PC-9 (cell line): ENCODE measurements at regions of chr11 and their contacts with region 1.

Region 1: DNA sequence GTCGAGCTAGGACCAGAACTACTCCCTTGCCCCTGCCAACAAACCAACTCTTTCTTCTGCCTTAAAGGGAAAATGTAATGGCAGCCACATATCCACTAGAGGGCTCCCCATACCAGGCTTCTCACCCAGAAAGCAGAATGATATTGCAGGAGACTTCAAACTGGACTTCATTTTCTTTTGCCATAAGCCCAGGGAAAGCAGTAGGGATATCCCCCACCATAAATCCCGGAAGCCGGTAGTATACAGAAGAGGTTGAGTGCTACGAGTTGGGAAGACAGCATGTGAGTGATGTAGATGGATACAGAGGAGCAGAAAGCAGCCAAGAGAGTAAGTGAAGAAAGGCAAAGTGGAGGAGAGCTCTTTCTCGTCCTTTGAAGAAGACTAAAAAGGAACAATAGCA is 12.1 kb downstream of the PLAAT5 start:
- DNase-seq: peak; percentile 62 to 63
- H3K4me3 ChIP-seq: no peak overlapping the region
- H3K27ac ChIP-seq: no peak overlapping the region
- H3K4me1 ChIP-seq: no peaks in the 10 kb centered on the region
- H3K27me3 ChIP-seq: no peaks in the 10 kb centered on the region
- CTCF ChIP-seq: peak; percentile 99

Region 2: DNA sequence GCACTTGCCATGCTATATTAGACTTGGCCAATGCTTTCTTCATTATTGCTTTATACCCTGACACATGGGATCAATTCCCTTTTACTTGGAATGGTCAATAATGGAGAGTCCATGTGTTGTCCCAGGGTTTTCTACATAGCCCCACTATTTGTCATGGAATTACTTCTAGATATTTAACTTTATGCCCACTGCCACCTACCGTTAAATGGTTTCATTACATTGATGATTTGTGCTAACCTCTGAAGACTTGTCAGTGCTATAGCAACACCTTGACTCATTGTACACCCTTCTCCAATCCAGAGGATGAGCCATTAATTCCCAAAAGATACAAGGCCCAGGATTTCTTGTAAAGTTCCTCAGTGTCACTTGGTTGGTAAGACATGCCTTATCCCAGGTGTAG is 204.1 kb before region 1 on chr11:
- CTCF ChIA-PET with region 1: no interaction called
- POLR2A ChIA-PET with region 1: no interaction called
- intact Hi-C with region 1: no loop called
- DNase-seq: no peak
- H3K4me3 ChIP-seq: no peak overlapping the region
- H3K27ac ChIP-seq: no peak overlapping the region
- H3K4me1 ChIP-seq: no peaks in the 10 kb centered on the region
- H3K27me3 ChIP-seq: peaks cover 12% of the 10 kb centered on the region; the same call in 1 of the 2 replicates
- CTCF ChIP-seq: peak; percentile 46

Region 3: DNA sequence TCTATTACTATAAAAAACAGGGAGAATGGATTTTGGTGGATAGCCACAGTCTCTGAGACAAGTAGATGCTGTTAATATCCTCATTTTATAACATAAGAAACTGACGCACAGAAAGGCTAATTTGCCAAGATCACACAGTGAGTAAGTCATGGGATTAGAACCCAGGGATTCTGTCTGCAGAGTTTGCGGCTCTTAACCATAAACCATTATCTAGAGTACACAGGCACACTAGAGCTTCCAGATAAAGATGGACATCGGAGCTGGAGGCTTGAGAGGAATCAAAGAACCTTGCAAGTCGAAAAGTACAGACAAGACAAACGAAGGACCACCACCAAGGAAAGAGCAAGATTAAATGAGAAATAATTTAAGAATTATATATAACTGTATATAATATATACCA is 38.3 kb after region 1 on chr11:
- CTCF ChIA-PET with region 1: no interaction called
- POLR2A ChIA-PET with region 1: no interaction called
- intact Hi-C with region 1: no loop called
- DNase-seq: no peak
- H3K4me3 ChIP-seq: no peak overlapping the region
- H3K27ac ChIP-seq: no peak overlapping the region
- H3K4me1 ChIP-seq: no peaks in the 10 kb centered on the region
- H3K27me3 ChIP-seq: no peaks in the 10 kb centered on the region
- CTCF ChIP-seq: no peak

Region 4: DNA sequence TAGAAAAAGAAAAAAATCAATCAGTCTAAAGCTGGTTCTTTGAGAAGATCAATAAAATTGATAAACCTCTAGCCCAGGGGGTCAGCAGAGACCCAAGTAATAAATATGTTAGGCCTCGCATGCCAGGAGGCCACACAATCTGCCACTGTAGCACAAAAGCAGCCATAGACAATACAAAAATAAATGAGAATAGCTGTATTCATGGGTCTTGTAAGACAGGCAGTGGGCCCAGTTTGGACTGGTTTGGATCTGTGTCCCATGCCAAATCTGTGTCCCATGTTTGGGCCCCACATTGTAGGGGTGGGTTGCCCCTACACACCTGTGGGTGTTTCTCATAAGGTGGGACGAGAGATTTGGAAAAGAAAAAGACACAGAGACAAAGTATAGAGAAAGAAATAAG is 51.1 kb after region 1 on chr11:
- CTCF ChIA-PET with region 1: interaction called, 5 read pairs
- POLR2A ChIA-PET with region 1: no interaction called
- intact Hi-C with region 1: loop called (anchors 2 kb)
- DNase-seq: no peak
- H3K4me3 ChIP-seq: no peak overlapping the region
- H3K27ac ChIP-seq: no peak overlapping the region
- H3K4me1 ChIP-seq: peaks cover 36% of the 10 kb centered on the region
- H3K27me3 ChIP-seq: no peaks in the 10 kb centered on the region
- CTCF ChIP-seq: no peak

Region 5: DNA sequence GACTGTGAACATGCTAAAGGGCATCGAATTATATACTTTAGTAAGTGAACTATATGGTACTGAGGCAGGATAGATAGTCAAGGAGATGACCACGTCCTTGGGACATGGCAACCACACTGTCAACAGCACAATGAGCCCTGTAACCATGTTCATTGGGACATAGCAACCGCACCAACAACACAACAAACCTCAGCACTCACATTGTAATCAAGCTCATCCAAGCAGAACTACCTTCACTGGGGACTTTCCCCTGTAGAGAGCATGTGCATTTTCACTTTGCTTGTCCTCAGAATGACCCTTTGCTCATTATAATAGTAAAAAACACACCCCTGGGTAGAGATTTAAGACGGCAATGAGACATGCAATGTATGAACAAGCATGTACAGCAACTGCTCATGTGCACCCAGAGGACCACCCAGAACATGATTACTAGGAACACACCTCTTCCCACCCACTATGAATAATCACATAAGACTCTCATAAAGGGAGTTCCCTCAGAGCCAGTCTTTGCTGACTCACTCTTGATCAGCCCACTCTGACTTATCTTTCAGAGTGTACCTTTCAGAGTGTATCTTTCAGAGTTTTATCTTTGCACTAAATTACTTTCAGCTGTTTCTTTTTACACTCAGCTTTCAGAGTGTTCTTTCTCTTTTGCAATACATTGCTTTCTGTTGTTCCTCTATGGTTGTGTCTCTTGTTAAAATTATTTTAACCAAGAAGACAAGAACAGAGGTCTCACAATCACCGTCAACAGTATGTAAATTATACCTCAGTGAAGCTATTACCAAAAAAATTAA is 88.3 kb after region 1 on chr11:
- CTCF ChIA-PET with region 1: no interaction called
- POLR2A ChIA-PET with region 1: no interaction called
- intact Hi-C with region 1: loop called (anchors 10 kb)
- DNase-seq: peak; percentile 72 to 96
- H3K4me3 ChIP-seq: peak overlapping the region; percentile 35; the same call in 1 of the 2 replicates
- H3K27ac ChIP-seq: peak overlapping the region; percentile 91
- H3K4me1 ChIP-seq: peaks cover 56% of the 10 kb centered on the region
- H3K27me3 ChIP-seq: no peaks in the 10 kb centered on the region
- CTCF ChIP-seq: no peak

Region 6: DNA sequence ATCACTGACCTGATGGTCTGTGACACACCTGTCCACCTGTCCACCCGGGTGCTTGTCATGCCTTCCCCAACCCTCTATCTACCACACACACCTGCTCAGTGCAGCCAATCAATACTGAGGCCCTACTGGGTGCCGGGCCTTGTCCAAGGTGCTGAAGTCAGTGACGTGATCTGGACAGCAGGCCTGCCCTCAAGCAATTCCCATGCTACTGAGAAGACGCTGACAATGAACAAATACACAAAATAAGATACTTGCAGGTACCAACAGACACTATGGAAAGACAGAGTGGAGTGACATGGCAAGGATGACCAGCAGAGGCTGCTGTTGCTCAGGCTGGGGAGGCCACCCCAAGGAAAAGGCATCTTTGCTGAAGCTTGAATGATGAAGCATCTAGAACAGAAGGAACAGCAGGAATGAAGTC is 114.1 kb after region 1 on chr11:
- CTCF ChIA-PET with region 1: no interaction called
- POLR2A ChIA-PET with region 1: interaction called, 4 read pairs
- intact Hi-C with region 1: loop called (anchors 2 kb)
- DNase-seq: peak in 1 of 2 experiments; percentile 44
- H3K4me3 ChIP-seq: no peak overlapping the region
- H3K27ac ChIP-seq: no peak overlapping the region
- H3K4me1 ChIP-seq: no peaks in the 10 kb centered on the region
- H3K27me3 ChIP-seq: no peaks in the 10 kb centered on the region
- CTCF ChIP-seq: peak; percentile 84

Region 7: DNA sequence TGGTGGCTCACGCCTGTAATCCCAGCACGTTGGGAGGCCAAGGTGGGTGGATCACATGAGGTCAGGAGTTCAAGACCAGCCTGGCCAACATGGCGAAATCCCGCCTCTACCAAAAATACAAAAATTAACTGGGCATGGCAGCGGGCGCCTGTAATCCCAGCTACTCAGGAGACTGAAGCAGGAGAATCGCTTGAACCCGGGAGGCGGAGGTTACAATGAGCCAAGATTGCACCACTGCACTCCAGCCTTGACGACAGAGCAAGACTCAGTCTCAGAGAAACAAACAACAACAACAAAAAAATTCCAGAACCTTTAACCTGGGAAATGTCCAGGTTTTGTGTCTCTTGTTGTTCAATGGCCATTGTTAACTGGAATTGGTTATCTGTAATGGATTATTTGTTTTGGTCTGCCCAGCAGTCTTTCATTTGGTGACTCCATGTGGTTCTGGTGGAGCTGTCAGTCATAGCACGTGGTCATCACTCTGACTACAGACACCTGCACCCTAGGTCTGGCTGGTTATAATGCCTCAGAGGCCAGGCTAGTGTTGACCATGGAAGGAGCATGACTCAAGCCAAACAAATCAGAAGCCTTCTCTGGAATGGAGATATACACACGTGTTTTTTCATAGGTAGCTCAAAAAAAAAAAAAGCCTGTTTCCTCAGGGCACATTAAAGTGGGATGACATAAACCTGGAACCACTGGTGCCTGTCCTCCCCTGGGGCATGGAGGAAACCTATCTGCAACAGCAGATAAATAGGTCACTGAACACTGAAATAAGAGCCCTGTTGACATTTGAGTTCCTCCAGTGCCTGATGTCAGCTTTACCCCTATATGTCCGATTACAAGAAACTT is 143.3 kb after region 1 on chr11:
- CTCF ChIA-PET with region 1: interaction called, 3 read pairs
- POLR2A ChIA-PET with region 1: no interaction called
- intact Hi-C with region 1: loop called (anchors 2 kb)
- DNase-seq: peak; percentile 67 to 97
- H3K4me3 ChIP-seq: no peak overlapping the region
- H3K27ac ChIP-seq: no peak overlapping the region
- H3K4me1 ChIP-seq: peaks cover 22% of the 10 kb centered on the region
- H3K27me3 ChIP-seq: no peaks in the 10 kb centered on the region
- CTCF ChIP-seq: no peak

Region 8: GRCh38 chr11:63738720-63739360 is 259.9 kb after region 1 on chr11:
- CTCF ChIA-PET with region 1: interaction called, 4 read pairs
- POLR2A ChIA-PET with region 1: no interaction called
- intact Hi-C with region 1: loop called (anchors 5 kb)
- DNase-seq: peak; percentile 67 to 73
- H3K4me3 ChIP-seq: no peak overlapping the region
- H3K27ac ChIP-seq: peak overlapping the region; percentile 18; the same call in 1 of the 2 replicates
- H3K4me1 ChIP-seq: 0 out of 2 replicates have a peak, but pooled peaks cover 3% of the 10 kb centered on the region
- H3K27me3 ChIP-seq: no peaks in the 10 kb centered on the region
- CTCF ChIP-seq: peak; percentile 99